ENCODE measurements at regions of chrX and their contacts with region 1.

Region 1: GRCh38 chrX:16719334-16720084 is at the start of gene SYAP1:
- DNase-seq: peak; percentile 95
- H3K4me3 ChIP-seq: peak within 1 kb of the TSS; percentile 42 to 72 (median 63)
- H3K27ac ChIP-seq: peak within 1 kb of the TSS; percentile 94
- H3K4me1 ChIP-seq: peaks cover 4% of the 10 kb centered on the region
- H3K27me3 ChIP-seq: no peaks in the 10 kb centered on the region
- CTCF ChIP-seq: no peak
- POLR2A ChIP-seq: peak; percentile 88
- total RNA-seq, gene SYAP1: 21.9 and 22.2 TPM in 2 replicates

Region 2: GRCh38 chrX:16516232-16516876 is 203.2 kb before region 1 on chrX:
- CTCF ChIA-PET with region 1: no interaction called
- POLR2A ChIA-PET with region 1: no interaction called
- dilution Hi-C with region 1: no loop called
- intact Hi-C with region 1: no loop called
- DNase-seq: no peak
- H3K4me3 ChIP-seq: no peak overlapping the region
- H3K27ac ChIP-seq: no peak overlapping the region
- H3K4me1 ChIP-seq: no peaks in the 10 kb centered on the region
- H3K27me3 ChIP-seq: no peaks in the 10 kb centered on the region
- CTCF ChIP-seq: no peak
- POLR2A ChIP-seq: no peak

Region 3: GRCh38 chrX:16528620-16529019 is 190.9 kb before region 1 on chrX:
- CTCF ChIA-PET with region 1: no interaction called
- POLR2A ChIA-PET with region 1: no interaction called
- dilution Hi-C with region 1: no loop called
- intact Hi-C with region 1: no loop called
- DNase-seq: no peak
- H3K4me3 ChIP-seq: no peak overlapping the region
- H3K27ac ChIP-seq: no peak overlapping the region
- H3K4me1 ChIP-seq: no peaks in the 10 kb centered on the region
- H3K27me3 ChIP-seq: no peaks in the 10 kb centered on the region
- CTCF ChIP-seq: no peak
- POLR2A ChIP-seq: no peak

Region 4: DNA sequence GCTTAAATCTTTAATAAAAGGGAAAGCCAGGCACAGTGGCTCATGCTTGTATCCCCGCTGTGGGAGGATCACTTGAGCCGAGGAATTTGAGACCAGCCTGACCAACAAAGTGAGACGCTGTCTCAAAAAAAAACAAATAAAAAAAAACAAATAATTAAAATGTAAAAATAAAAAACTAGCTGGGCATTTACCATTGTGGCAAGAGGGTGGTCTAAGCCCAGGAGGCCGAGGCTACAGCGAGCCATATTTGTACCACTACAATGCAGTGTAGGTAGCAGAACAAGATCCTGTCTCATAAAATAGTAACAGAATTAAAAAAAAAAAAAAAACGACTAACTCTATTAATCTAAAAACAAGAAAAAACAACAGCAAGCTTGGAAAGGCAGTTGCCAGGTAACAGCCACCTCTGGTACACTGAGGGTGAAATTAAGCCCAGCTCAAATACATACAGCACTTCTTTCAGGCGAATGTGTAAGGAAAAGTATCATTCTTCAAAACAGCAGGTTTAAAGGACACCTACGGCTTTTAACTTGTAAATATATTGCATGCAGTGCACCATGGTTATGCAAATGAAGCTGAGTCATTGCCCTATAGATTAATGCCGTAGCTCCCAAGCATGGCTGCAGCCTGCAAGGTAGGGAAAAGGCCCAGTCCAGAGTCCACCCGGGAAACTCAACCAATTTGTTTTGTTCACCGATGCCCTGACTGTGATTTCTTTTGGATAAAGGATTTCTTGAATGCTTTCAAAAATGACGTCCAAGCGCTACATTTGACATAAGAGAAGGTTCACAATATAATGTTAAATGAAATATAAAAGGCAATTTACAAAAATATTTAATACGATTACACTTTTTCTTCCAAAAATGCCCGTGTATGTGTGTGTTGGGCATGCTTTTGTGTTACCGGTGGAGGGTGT is 52.2 kb after region 1 on chrX:
- CTCF ChIA-PET with region 1: no interaction called
- POLR2A ChIA-PET with region 1: interaction called, 11 read pairs
- dilution Hi-C with region 1: no loop called
- intact Hi-C with region 1: loop called (anchors 2 kb)
- DNase-seq: peak; percentile 57
- H3K4me3 ChIP-seq: no peak overlapping the region
- H3K27ac ChIP-seq: peak overlapping the region; percentile 90
- H3K4me1 ChIP-seq: no peaks in the 10 kb centered on the region
- H3K27me3 ChIP-seq: no peaks in the 10 kb centered on the region
- CTCF ChIP-seq: no peak
- POLR2A ChIP-seq: peak; percentile 100

Region 5: GRCh38 chrX:17206584-17206983 is 487.1 kb after region 1 on chrX:
- CTCF ChIA-PET with region 1: no interaction called
- POLR2A ChIA-PET with region 1: no interaction called
- dilution Hi-C with region 1: no loop called
- intact Hi-C with region 1: no loop called
- DNase-seq: no peak
- H3K4me3 ChIP-seq: no peak overlapping the region
- H3K27ac ChIP-seq: no peak overlapping the region
- H3K4me1 ChIP-seq: no peaks in the 10 kb centered on the region
- H3K27me3 ChIP-seq: no peaks in the 10 kb centered on the region
- CTCF ChIP-seq: no peak
- POLR2A ChIP-seq: no peak

Measured in endothelial cell of umbilical vein (primary cell).